Activated CD4-positive, alpha-beta T cell treated with anti-CD3 and anti-CD28 coated beads for 36 hours (primary cell): ENCODE measurements at regions of chr2 and their contacts with region 1.

Region 1: DNA sequence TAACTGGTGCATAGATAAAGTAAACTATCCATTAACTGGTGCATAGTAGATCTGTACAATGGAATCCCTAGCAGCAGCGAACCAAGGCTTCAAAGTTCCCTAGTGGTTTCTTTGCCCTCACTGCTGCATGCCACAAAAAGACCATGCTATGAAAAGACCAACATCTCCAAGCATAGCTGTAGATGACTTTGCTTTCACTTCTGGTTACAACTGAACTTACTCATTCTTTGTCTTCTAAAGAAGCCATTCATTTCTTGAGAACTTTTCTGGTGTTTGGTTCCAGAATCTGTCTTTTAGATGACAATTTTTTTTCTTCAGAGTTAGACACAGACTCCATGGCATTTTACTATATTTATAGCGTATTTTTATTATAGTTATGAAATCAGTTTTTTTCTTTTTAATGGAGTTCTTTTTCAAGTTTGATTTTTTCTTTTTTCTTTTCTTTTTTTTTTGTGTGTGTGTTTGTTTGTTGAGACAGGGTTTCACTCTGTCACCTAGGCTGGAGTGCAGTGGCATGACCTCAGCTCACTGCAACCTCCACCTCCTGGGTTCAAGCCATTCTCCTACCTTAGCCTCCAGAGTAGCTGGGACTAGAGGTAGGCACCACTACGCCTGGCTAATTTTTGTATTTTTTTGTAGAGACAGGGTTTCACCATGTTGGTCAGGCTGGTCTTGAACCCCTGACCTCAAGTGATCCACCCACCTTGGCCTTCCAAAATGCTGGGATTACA is 63.6 kb downstream of the SLC35F5 start:
- DNase-seq: peak; percentile 61
- ATAC-seq: peak; percentile 86
- H3K4me3 Mint-ChIP-seq: peak overlapping the region; percentile 63
- H3K27ac Mint-ChIP-seq: peak overlapping the region; percentile 96
- H3K4me1 Mint-ChIP-seq: peaks cover 47% of the 10 kb centered on the region
- H3K27me3 Mint-ChIP-seq: no peaks in the 10 kb centered on the region

Region 2: DNA sequence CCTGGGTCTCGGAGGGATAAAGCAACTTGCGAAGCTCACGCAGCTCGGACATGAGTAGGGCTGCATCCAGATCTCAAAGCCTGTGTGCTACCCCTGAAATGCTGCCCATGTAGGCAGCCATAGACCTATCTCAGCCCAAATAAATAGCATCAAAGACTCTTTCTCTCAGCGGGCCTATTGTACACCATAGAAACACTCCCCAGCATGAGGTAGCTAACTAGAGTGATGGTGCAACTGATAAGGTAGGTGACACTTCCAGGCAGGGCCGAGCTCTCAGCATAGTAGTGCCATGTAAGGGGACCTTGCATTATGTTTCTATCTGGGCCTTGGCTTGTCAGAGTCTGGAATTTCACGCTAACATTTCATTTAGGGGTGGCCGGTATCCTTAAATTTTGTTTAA is 13.4 kb before region 1 on chr2:
- CTCF ChIA-PET with region 1: interaction called, 10 read pairs
- POLR2A ChIA-PET with region 1: no interaction called
- intact Hi-C with region 1: no loop called
- DNase-seq: no peak
- ATAC-seq: no peak
- H3K4me3 Mint-ChIP-seq: no peak overlapping the region
- H3K27ac Mint-ChIP-seq: no peak overlapping the region
- H3K4me1 Mint-ChIP-seq: no peaks in the 10 kb centered on the region
- H3K27me3 Mint-ChIP-seq: no peaks in the 10 kb centered on the region

Region 3: DNA sequence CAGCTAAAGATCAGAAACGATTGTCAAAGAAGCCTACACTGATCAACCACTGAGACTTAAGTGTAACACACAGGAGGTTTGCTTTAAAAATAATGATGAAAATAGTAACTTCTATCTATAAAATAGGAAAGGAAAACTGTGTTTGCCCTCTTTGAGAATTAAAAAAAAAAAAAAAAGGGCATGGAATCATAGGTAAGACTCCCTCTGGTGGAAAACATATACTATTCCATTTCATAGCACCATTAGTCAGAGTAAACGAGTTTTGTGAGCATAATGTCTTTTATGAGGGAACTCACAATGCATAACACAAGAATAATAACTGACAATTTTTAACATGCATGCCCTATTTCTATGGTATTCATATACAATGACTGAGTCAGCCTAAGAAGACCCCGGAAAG is 27.3 kb after region 1 on chr2:
- CTCF ChIA-PET with region 1: no interaction called
- POLR2A ChIA-PET with region 1: no interaction called
- intact Hi-C with region 1: no loop called
- DNase-seq: no peak
- ATAC-seq: no peak
- H3K4me3 Mint-ChIP-seq: no peak overlapping the region
- H3K27ac Mint-ChIP-seq: no peak overlapping the region
- H3K4me1 Mint-ChIP-seq: no peaks in the 10 kb centered on the region
- H3K27me3 Mint-ChIP-seq: no peaks in the 10 kb centered on the region

Region 4: GRCh38 chr2:113848758-113849415 is 156.0 kb after region 1 on chr2:
- CTCF ChIA-PET with region 1: interaction called, 4 read pairs
- POLR2A ChIA-PET with region 1: interaction called, 5 read pairs
- intact Hi-C with region 1: loop called (anchors 2 kb)
- DNase-seq: peak; percentile 66
- ATAC-seq: peak; percentile 99
- H3K4me3 Mint-ChIP-seq: no peak overlapping the region
- H3K27ac Mint-ChIP-seq: peak overlapping the region; percentile 85
- H3K4me1 Mint-ChIP-seq: peaks cover 16% of the 10 kb centered on the region
- H3K27me3 Mint-ChIP-seq: no peaks in the 10 kb centered on the region

Region 5: GRCh38 chr2:113889471-113890252 is 196.8 kb after region 1 on chr2 and contains the start of gene ACTR3:
- CTCF ChIA-PET with region 1: interaction called, 4 read pairs
- POLR2A ChIA-PET with region 1: interaction called, 3 read pairs
- intact Hi-C with region 1: loop called (anchors 1 to 5 kb)
- DNase-seq: peak; percentile 99
- ATAC-seq: peak; percentile 79
- H3K4me3 Mint-ChIP-seq: peak within 1 kb of the TSS; percentile 94
- H3K27ac Mint-ChIP-seq: peak within 1 kb of the TSS; percentile 99
- H3K4me1 Mint-ChIP-seq: peaks cover 67% of the 10 kb centered on the region
- H3K27me3 Mint-ChIP-seq: no peaks in the 10 kb centered on the region
- total RNA-seq, gene ACTR3: 495 to 583 TPM